ENCODE measurements at regions of chr5 and their contacts with region 1.

Region 1: GRCh38 chr5:145220481-145220880 is 614.7 kb downstream of the PRELID2 start:
- DNase-seq: peak; percentile 45
- H3K4me3 Mint-ChIP-seq: no peak overlapping the region
- H3K27ac Mint-ChIP-seq: no peak overlapping the region
- H3K4me1 Mint-ChIP-seq: peaks cover 13% of the 10 kb centered on the region
- H3K27me3 Mint-ChIP-seq: no peaks in the 10 kb centered on the region
- CTCF ChIP-seq: no peak

Region 2: DNA sequence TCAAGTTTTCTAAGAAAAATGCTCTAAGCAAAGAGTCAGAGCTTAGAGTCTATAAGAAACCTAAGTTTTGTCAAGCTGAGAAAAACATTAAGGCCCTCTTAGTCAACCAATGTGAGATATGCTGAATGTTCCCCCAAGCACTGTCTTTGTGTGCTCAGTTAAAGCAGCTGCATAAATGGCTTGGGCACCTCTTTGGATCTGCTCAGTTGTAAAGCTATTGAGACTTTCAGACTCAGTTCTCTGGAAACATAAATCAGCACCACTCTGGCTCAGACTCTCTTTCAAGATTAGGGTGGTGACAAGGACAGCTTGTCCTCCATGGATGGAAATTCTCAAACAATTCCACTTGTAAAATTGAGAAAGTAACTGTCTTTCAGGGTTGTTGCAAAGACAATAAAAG is 193.2 kb before region 1 on chr5:
- CTCF ChIA-PET with region 1: no interaction called
- intact Hi-C with region 1: loop called (anchors 5 kb)
- DNase-seq: no peak
- H3K4me3 Mint-ChIP-seq: no peak overlapping the region
- H3K27ac Mint-ChIP-seq: no peak overlapping the region
- H3K4me1 Mint-ChIP-seq: peaks cover 17% of the 10 kb centered on the region
- H3K27me3 Mint-ChIP-seq: no peaks in the 10 kb centered on the region
- CTCF ChIP-seq: no peak

Region 3: DNA sequence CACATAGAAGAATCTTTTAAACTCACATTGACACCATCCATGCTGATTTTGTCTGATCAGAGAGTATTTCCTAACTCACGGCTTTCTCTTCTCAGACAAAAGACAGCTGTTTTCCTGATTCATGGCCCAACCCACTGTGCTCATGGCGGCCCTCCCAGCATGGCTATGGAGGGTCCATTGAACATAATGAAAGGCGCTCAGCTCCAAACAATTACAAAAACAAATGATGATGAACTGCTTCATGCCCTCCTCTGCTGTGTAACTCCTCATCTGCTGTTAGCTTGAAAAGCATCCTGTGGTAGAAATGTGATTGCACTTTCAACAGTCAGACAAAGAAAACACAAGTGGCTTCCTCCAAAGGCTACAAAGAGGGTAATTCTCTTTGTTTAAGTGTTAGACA is 59.1 kb before region 1 on chr5:
- CTCF ChIA-PET with region 1: no interaction called
- intact Hi-C with region 1: loop called (anchors 5 kb)
- DNase-seq: no peak
- H3K4me3 Mint-ChIP-seq: no peak overlapping the region
- H3K27ac Mint-ChIP-seq: no peak overlapping the region
- H3K4me1 Mint-ChIP-seq: no peaks in the 10 kb centered on the region
- H3K27me3 Mint-ChIP-seq: no peaks in the 10 kb centered on the region
- CTCF ChIP-seq: no peak

Region 4: DNA sequence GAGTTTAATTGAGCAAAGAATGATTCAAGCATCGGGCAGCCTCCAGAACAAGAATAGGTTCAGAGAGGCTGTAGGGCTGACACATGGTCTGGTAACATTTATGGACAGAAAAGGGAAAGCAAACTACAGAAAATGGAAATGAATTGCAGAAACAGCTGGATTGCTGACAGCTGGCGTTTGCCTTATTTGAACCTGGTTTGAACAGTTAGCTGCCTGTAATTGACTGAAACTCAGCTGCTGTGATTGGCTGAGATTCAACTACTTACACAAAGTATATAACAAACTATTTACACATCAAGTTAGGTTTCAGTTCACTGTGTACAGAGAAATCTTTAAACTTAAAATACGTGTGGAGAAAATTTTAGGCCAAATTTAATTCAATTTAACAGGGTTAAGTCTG is 172.9 kb after region 1 on chr5:
- CTCF ChIA-PET with region 1: no interaction called
- intact Hi-C with region 1: no loop called
- DNase-seq: no peak
- H3K4me3 Mint-ChIP-seq: no peak overlapping the region
- H3K27ac Mint-ChIP-seq: no peak overlapping the region
- H3K4me1 Mint-ChIP-seq: no peaks in the 10 kb centered on the region
- H3K27me3 Mint-ChIP-seq: no peaks in the 10 kb centered on the region
- CTCF ChIP-seq: no peak

Region 5: DNA sequence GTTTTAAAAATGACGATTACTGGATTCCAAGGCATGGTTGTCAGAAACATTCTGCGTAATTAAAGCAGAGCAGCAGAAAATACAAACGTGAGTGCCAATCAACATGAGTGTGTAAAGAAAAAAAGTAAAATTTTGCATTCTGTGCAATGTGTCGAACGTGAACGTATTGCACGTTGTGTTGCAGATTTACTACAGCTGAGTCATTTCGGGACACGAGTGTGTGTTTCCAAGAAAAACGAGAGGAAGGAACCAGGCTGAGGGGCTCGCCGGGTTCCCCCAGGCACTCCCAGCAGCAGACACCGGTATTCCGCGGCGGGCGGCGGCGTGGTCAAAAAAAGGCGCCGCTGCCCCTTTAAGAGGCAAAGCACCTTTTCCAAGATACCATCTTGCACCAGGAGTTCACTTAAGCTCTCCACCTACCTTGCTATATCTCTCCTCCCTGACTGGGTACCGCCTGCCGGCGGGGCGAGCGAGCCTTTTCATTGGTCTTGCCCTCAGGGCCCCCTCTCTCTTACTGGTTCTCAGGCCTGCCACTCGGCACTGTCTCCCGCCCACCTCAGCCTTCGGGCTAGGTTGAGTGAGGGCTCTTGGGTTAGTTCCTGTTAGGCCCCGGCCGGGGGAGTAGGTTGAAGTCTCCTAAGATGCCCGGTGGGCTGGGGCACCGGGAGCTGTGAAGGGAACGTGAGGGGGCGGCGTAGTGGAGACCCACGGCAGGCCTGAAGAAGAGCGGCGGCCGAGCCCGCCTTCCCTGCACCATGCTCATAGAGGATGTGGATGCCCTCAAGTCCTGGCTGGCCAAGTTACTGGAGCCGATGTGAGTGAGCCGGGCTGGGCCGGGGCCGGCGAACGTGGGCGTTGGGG is 982.8 kb after region 1 on chr5 and contains the start of gene RBM27:
- CTCF ChIA-PET with region 1: no interaction called
- intact Hi-C with region 1: no loop called
- DNase-seq: peak; percentile 99
- H3K4me3 Mint-ChIP-seq: no peak within 1 kb of the TSS
- H3K27ac Mint-ChIP-seq: no peak within 1 kb of the TSS
- H3K4me1 Mint-ChIP-seq: no peaks in the 10 kb centered on the region
- H3K27me3 Mint-ChIP-seq: no peaks in the 10 kb centered on the region
- CTCF ChIP-seq: no peak
- total RNA-seq, gene RBM27: 24.1 and 26.3 TPM in 2 replicates

Measured in Calu3 (cell line).